ENCODE measurements at regions of chr4 and their contacts with region 1.

Region 1: DNA sequence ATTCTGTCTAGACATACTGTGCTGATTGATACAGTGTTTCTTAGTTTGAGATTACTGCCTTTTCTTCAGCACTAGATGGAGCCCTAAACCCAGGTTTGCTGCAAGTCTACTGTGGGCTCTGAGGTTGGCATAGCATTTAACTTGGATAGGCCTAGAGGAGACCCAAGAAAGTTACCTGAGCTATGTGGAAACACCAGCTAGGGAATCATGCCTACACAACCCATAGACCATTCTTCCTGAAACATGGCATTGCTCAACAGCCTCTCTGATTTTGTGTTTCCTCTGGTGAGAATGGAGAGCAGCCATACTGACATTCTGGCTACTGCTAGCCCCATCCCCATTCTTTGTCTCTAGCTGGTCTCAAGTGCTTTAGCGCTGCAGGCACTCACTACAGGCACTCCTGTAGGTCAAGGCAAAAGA is 287.7 kb upstream of the PCDH18 start:
- DNase-seq: no peak
- ATAC-seq: peak; percentile 43 to 72 (median 68)
- H3K4me3 ChIP-seq: no peak overlapping the region
- H3K27ac ChIP-seq: no peak overlapping the region
- H3K4me1 ChIP-seq: no peaks in the 10 kb centered on the region
- H3K27me3 ChIP-seq: no peaks in the 10 kb centered on the region
- CTCF ChIP-seq: peak; percentile 40

Region 2: GRCh38 chr4:138182838-138183426 is 363.0 kb after region 1 on chr4:
- intact Hi-C with region 1: loop called (anchors 5 to 10 kb)
- DNase-seq: no peak
- ATAC-seq: peak; percentile 48 to 89 (median 74)
- H3K4me3 ChIP-seq: no peak overlapping the region
- H3K27ac ChIP-seq: no peak overlapping the region
- H3K4me1 ChIP-seq: peaks cover 19% of the 10 kb centered on the region
- H3K27me3 ChIP-seq: no peaks in the 10 kb centered on the region
- CTCF ChIP-seq: peak; percentile 76

Region 3: GRCh38 chr4:138334346-138335016 is 514.5 kb after region 1 on chr4:
- intact Hi-C with region 1: no loop called
- DNase-seq: no peak
- ATAC-seq: no peak
- H3K4me3 ChIP-seq: no peak overlapping the region
- H3K27ac ChIP-seq: no peak overlapping the region
- H3K4me1 ChIP-seq: no peaks in the 10 kb centered on the region
- H3K27me3 ChIP-seq: peaks cover 0 to 2% (median 0%) of the 10 kb centered on the region in 3 donors
- CTCF ChIP-seq: no peak

Region 4: DNA sequence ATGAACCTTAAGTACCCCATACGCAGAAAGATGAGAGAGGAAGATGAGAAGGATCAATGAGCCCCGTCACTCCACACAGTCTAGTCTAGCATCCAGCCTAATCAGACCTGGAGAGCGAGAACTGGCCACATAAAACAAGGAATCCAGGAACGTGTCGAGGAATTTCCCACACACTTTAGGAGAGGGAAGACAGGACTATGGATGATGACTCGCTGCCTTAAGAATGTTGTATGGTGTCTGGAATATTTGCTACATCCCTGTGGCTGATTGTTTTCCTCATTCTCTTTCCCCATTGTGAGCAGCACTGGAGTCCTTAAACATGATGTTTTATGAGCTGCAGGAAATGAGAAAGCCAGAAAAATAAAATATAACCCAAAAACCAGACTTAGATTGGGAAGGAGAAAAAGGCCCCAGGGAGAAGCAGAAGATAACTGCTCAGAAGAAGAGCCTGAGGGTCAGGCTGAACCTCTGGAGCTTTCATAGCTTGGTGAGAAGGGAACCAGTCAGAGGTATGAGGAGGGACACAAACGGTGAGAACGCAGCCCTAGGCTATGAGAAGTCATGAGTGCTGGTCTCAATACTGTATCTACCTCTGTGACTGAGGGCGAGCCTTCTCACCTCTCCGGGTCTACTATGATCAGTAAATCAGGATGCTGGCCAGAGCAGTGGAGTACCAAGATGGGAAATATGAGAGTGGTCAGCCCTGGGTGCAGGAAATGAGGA is 1056.1 kb after region 1 on chr4:
- intact Hi-C with region 1: loop called in 1 of 2 experiments (anchors 5 kb)
- DNase-seq: no peak
- ATAC-seq: no peak
- H3K4me3 ChIP-seq: no peak overlapping the region
- H3K27ac ChIP-seq: no peak overlapping the region
- H3K4me1 ChIP-seq: no peaks in the 10 kb centered on the region
- H3K27me3 ChIP-seq: no peaks in the 10 kb centered on the region
- CTCF ChIP-seq: no peak